Transverse colon (tissue), 4 donors: ENCODE measurements at regions of chr6 and their contacts with region 1.

Region 1: GRCh38 chr6:169701954-169702839 is at the starts of genes C6orf120 and WDR27:
- DNase-seq: peak; percentile 98
- H3K4me3 ChIP-seq: peak within 1 kb of the TSS; percentile 66 to 96 (median 78)
- H3K27ac ChIP-seq: peak within 1 kb of the TSS; percentile 94 to 98 (median 97)
- H3K4me1 ChIP-seq: peaks cover 17 to 50% (median 33%) of the 10 kb centered on the region in 4 donors
- H3K27me3 ChIP-seq: no peaks in the 10 kb centered on the region
- CTCF ChIP-seq: no peak
- EP300 ChIP-seq: no peak
- POLR2A ChIP-seq: peak; percentile 98
- total RNA-seq, gene C6orf120: 20.5 to 45.2 (median 40.5) TPM
- total RNA-seq, gene WDR27: 44.9 to 75.0 (median 57.0) TPM

Region 2: DNA sequence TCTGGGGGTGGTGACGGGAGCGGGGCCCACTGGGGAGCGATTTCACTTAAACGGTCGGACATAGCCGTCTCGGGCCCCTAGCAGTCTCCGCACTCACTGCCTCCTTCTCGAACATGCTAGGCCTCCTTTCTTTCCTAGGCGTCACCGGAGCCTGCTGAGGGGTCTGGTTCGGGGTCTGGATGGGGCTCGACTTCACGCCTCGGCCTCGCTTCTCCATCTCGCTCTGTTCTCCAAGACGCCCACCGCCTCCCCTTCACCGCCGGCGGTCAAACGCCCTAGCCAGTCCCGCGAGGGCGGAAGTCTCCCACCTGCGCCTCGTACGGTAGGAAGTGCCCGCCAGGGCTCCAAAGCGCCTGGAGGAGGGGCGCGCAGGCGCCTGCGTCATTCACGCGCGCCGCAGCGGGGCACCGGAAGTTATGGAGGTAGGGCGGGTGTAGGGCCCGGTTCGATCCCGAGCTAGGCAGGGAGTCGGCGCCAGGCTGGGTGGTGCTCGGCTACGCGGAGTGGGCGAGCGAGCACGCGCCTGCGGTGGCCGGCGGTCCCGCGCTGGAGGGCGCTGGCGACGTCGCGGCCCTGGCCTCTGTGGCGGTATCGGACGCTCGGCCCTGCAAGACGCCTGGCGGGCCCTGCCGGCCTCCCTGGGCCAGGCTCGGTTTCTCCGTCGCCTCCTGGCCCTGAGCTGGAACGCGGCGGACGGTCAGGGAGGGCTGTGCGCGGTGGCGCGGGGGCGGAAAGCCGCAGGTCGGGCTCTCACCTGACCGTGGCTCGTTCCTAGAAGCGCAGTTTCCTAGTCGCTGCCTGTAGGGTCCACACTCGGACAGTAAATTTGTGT is 49.3 kb after region 1 on chr6 and contains the starts of genes DYNLT2 and ERMARD:
- in situ Hi-C with region 1: no loop called
- intact Hi-C with region 1: loop called (anchors 2 kb)
- DNase-seq: peak; percentile 96
- H3K4me3 ChIP-seq: peak within 1 kb of the TSS; percentile 61 to 94 (median 74)
- H3K27ac ChIP-seq: peak within 1 kb of the TSS; percentile 95 to 98 (median 96)
- H3K4me1 ChIP-seq: peaks cover 3 to 30% (median 19%) of the 10 kb centered on the region in 4 donors
- H3K27me3 ChIP-seq: no peaks in the 10 kb centered on the region
- CTCF ChIP-seq: peak; percentile 16 to 76 (median 33)
- EP300 ChIP-seq: no peak
- POLR2A ChIP-seq: peak; percentile 95
- total RNA-seq, gene DYNLT2: 3.3 to 7.5 (median 4.4) TPM
- total RNA-seq, gene ERMARD: 15.7 to 29.5 (median 20.8) TPM